HCT116 (cell line): ENCODE measurements at regions of chr9 and their contacts with region 1.

Region 1: DNA sequence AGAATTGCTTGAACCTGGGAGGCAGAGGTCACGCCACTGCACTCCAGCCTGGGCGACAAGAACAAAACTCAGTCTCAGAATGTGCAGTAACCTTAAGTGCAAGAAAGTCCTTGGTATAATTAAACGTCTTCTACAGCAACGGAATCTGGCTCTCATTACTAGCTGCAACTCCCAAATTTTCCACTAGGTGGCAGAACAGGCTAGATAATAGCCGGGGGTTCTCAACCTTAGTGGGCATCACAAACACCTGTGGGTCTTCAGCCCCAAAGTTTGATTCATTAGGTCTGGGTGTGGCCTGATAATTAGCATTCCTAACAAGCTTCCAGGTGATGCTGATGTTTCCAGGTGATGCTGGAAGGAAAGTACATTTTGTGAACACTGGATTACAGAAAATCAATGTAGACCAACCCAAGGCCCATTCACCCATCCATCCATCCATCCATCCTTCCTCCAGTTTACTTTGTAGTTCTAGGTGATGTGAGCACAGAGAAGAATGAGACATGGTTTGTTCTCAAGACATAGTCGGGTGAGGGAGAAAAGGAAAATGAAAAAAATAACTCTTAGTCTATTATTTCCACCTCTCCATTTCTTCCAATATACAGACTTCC is 37.3 kb downstream of the FBXW2 start:
- DNase-seq: peak; percentile 24
- ATAC-seq: peak; percentile 86
- H3K4me3 ChIP-seq: no peak overlapping the region
- H3K27ac ChIP-seq: no peak overlapping the region
- H3K4me1 ChIP-seq: no peaks in the 10 kb centered on the region
- H3K27me3 ChIP-seq: no peaks in the 10 kb centered on the region
- CTCF ChIP-seq: peak; percentile 74 to 93 (median 76)
- POLR2A ChIP-seq: no peak
- RAD21 ChIP-seq: peak; percentile 92

Region 2: GRCh38 chr9:120801441-120801840 is 45.5 kb after region 1 on chr9:
- CTCF ChIA-PET with region 1: no interaction called
- POLR2A ChIA-PET with region 1: no interaction called
- RAD21 ChIA-PET with region 1: no interaction called
- intact Hi-C with region 1: no loop called
- DNase-seq: no peak
- ATAC-seq: no peak
- H3K4me3 ChIP-seq: no peak overlapping the region
- H3K27ac ChIP-seq: no peak overlapping the region
- H3K4me1 ChIP-seq: no peaks in the 10 kb centered on the region
- H3K27me3 ChIP-seq: no peaks in the 10 kb centered on the region
- CTCF ChIP-seq: no peak
- POLR2A ChIP-seq: no peak
- RAD21 ChIP-seq: no peak

Region 3: GRCh38 chr9:120839146-120839545 is 83.2 kb after region 1 on chr9:
- CTCF ChIA-PET with region 1: no interaction called
- POLR2A ChIA-PET with region 1: no interaction called
- RAD21 ChIA-PET with region 1: no interaction called
- intact Hi-C with region 1: no loop called
- DNase-seq: no peak
- ATAC-seq: no peak
- H3K4me3 ChIP-seq: no peak overlapping the region
- H3K27ac ChIP-seq: no peak overlapping the region
- H3K4me1 ChIP-seq: peaks cover 9 to 19% of the 10 kb centered on the region in 2 experiments
- H3K27me3 ChIP-seq: no peaks in the 10 kb centered on the region
- CTCF ChIP-seq: no peak
- POLR2A ChIP-seq: no peak
- RAD21 ChIP-seq: no peak

Region 4: GRCh38 chr9:121156263-121156731 is 400.4 kb after region 1 on chr9:
- CTCF ChIA-PET with region 1: no interaction called
- POLR2A ChIA-PET with region 1: no interaction called
- RAD21 ChIA-PET with region 1: no interaction called
- intact Hi-C with region 1: loop called (anchors 10 kb)
- DNase-seq: no peak
- ATAC-seq: no peak
- H3K4me3 ChIP-seq: no peak overlapping the region
- H3K27ac ChIP-seq: no peak overlapping the region
- H3K4me1 ChIP-seq: peaks cover 9 to 30% of the 10 kb centered on the region in 2 experiments; a peak in 3 of 4 replicates
- H3K27me3 ChIP-seq: no peaks in the 10 kb centered on the region
- CTCF ChIP-seq: no peak
- POLR2A ChIP-seq: no peak
- RAD21 ChIP-seq: no peak